ENCODE measurements at regions of chr15 and their contacts with region 1.

Region 1: GRCh38 chr15:50908210-50909009 is at the start of gene AP4E1:
- DNase-seq: peak; percentile 78 to 86
- ATAC-seq: peak; percentile 89 to 95
- H3K4me3 ChIP-seq: peak within 1 kb of the TSS; percentile 80 to 99 (median 94)
- H3K27ac ChIP-seq: peak within 1 kb of the TSS; percentile 84 to 95 (median 92)
- H3K4me1 ChIP-seq: peaks cover 18 to 24% of the 10 kb centered on the region in 2 donors
- H3K27me3 ChIP-seq: no peaks in the 10 kb centered on the region
- CTCF ChIP-seq: peak; percentile 98 to 100 (median 99)
- POLR2A ChIP-seq: peak; percentile 63 to 75
- total RNA-seq, gene AP4E1: 11.6 to 14.0 (median 13.4) TPM

Region 2: DNA sequence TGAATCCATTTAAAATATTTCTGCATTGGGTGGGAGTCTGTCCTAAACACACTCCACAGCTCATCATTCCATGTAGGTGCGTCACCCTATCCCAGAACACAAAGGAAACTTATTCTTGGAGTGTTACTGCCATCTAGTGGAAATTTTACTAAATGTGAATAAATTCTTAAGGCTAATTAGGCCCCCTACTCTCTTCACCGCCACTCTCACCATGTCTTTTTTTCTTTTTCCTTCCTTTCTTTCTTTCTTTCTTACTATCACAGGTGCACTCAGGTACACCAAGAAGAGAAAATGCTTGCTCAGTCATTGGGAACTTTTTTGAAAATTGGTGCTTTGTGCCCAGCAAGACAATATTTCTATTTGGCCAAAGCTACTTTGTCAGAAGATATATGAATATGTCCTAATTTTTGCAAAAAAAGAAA is 762.9 kb before region 1 on chr15:
- in situ Hi-C with region 1: no loop called
- intact Hi-C with region 1: loop called (anchors 5 kb)
- DNase-seq: no peak
- ATAC-seq: peak; percentile 65 to 76
- H3K4me3 ChIP-seq: no peak overlapping the region
- H3K27ac ChIP-seq: no peak overlapping the region
- H3K4me1 ChIP-seq: no peaks in the 10 kb centered on the region
- H3K27me3 ChIP-seq: no peaks in the 10 kb centered on the region
- CTCF ChIP-seq: peak; percentile 30 to 62 (median 60)
- POLR2A ChIP-seq: no peak

Region 3: DNA sequence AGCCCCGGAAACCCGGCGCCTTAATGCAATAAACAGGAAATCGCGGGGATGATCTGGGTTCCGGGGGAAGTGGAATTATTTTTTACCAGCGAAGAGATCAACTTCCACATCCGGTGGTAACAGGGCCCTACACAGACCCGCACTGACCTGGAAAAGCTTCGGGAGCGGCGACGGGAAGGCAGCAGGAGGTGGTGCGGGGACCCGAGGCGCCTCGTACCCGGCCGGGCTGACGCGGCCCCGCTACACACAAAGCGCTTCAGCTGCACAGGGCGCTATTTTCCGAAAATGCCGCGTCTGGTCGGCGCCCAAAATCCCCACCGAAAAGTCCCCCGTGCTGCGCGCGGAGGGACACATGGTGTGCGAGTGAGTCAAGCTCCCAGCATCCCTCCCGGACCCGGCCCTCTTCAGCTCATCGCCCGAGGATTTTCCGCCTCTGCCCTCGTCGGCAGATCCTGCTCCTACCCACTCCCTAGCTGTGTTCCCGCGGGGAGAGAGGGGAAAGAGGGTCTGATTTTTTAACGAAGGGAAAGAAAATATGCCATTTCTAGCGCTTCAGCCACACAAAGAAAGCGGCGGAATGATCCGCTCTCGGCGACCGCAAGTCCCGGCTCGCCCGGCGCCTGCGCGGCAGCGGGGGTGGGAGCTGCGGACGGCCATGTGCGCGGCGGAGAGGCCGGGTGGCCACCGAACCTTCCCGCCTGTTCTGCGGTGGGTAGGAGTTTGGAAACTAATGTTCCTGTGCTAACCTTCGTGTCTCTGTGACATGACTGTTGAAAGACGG is 553.4 kb before region 1 on chr15 and contains the start of gene GABPB1:
- in situ Hi-C with region 1: no loop called
- intact Hi-C with region 1: loop called (anchors 1 kb)
- DNase-seq: peak; percentile 79 to 80
- ATAC-seq: peak; percentile 87 to 90
- H3K4me3 ChIP-seq: peak within 1 kb of the TSS; percentile 79 to 94 (median 81)
- H3K27ac ChIP-seq: peak within 1 kb of the TSS; percentile 93 to 97 (median 94)
- H3K4me1 ChIP-seq: peaks cover 44 to 46% of the 10 kb centered on the region in 2 donors
- H3K27me3 ChIP-seq: no peaks in the 10 kb centered on the region
- CTCF ChIP-seq: no peak
- POLR2A ChIP-seq: peak; percentile 53 to 64
- total RNA-seq, gene GABPB1: 7.4 to 11.5 (median 8.7) TPM

Region 4: DNA sequence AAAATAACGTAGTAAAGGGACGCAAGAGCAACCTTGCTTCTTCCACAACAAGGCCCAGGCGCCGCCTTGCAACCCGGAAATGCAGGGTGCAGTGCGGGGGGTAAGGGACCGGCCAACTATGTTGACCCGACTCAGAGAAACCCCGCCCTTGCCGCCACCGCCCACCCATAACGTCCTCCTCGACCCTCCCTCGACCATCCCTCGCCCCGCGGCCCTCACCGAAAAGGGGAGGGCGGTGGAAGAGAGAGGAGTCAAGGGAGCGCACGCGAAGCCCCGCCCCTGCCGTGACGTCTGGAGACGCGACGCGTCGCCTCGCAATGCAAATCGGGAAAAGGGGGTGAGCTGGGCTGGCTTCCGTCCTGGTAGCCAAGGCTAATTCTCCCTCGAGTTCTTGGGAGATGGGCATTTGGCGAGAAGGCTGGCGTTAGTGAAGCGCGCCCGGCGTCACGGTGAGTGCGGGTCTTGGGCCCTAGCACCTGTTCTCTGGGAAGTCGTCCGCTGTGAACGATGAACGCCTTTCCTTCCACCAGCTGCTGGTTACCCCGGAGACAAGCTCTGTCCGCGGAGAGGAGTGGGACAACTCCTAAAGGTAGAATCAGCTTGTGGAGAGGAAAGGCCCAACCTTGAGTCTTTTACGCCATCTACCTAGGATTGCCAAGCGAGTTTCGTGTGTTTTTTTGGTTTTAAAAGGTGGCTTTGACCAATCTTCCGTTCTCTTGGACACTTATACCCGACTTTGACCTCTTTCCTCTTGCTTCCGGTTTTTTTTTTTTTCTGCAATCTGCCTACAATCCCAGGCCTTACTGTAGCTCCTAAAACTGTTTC is 484.1 kb before region 1 on chr15 and contains the start of gene USP8:
- in situ Hi-C with region 1: loop called in 1 of 4 experiments (anchors 25 kb)
- intact Hi-C with region 1: no loop called
- DNase-seq: peak; percentile 87 to 93
- ATAC-seq: peak; percentile 98
- H3K4me3 ChIP-seq: peak within 1 kb of the TSS; percentile 83 to 94 (median 84)
- H3K27ac ChIP-seq: peak within 1 kb of the TSS; percentile 89 to 93 (median 90)
- H3K4me1 ChIP-seq: peaks cover 20 to 26% of the 10 kb centered on the region in 2 donors
- H3K27me3 ChIP-seq: no peaks in the 10 kb centered on the region
- CTCF ChIP-seq: no peak
- POLR2A ChIP-seq: peak; percentile 81 to 83
- total RNA-seq, gene USP8: 30.8 to 49.3 (median 46.8) TPM

Region 5: DNA sequence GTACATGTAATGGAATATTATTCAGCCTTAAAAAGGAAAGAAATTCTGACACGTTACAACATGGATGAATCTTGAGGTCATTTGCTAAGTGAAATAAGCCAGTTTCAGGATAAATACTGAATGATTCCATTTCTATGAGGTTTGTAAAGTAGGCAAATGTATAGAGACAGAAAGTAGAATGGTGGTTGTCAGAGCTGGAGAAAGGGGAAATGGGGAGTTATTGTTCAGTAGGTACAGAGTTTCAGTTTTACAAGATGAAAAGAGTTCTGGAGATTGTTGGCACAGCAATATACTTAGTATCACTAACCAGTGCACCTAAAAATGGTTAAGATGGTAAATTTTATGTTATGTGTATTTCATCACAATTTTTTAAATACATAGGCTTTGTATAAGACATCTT is 423.6 kb before region 1 on chr15:
- in situ Hi-C with region 1: loop called in 1 of 4 experiments (anchors 25 kb)
- intact Hi-C with region 1: no loop called
- DNase-seq: no peak
- ATAC-seq: no peak
- H3K4me3 ChIP-seq: no peak overlapping the region
- H3K27ac ChIP-seq: no peak overlapping the region
- H3K4me1 ChIP-seq: no peaks in the 10 kb centered on the region
- H3K27me3 ChIP-seq: no peaks in the 10 kb centered on the region
- CTCF ChIP-seq: no peak
- POLR2A ChIP-seq: no peak

Region 6: GRCh38 chr15:50675536-50676144 is 232.8 kb before region 1 on chr15:
- in situ Hi-C with region 1: loop called in 1 of 4 experiments (anchors 10 kb)
- intact Hi-C with region 1: loop called (anchors 1 kb)
- DNase-seq: no peak
- ATAC-seq: no peak
- H3K4me3 ChIP-seq: no peak overlapping the region
- H3K27ac ChIP-seq: no peak overlapping the region
- H3K4me1 ChIP-seq: peaks cover 10 to 19% of the 10 kb centered on the region in 2 donors
- H3K27me3 ChIP-seq: no peaks in the 10 kb centered on the region
- CTCF ChIP-seq: peak; percentile 66 to 84 (median 80)
- POLR2A ChIP-seq: no peak

Region 7: GRCh38 chr15:50765195-50765973 is 143.0 kb before region 1 on chr15 and contains the start of gene SPPL2A:
- in situ Hi-C with region 1: no loop called
- intact Hi-C with region 1: loop called (anchors 2 kb)
- DNase-seq: peak; percentile 75 to 87
- ATAC-seq: peak; percentile 39 to 42
- H3K4me3 ChIP-seq: peak within 1 kb of the TSS; percentile 67 to 81 (median 74)
- H3K27ac ChIP-seq: peak within 1 kb of the TSS; percentile 93 to 98 (median 97)
- H3K4me1 ChIP-seq: peaks cover 37 to 46% of the 10 kb centered on the region in 2 donors
- H3K27me3 ChIP-seq: no peaks in the 10 kb centered on the region
- CTCF ChIP-seq: peak in 1 of 5 experiments; percentile 5
- POLR2A ChIP-seq: peak; percentile 96 to 97
- total RNA-seq, gene SPPL2A: 577 to 774 (median 620) TPM

Region 8: DNA sequence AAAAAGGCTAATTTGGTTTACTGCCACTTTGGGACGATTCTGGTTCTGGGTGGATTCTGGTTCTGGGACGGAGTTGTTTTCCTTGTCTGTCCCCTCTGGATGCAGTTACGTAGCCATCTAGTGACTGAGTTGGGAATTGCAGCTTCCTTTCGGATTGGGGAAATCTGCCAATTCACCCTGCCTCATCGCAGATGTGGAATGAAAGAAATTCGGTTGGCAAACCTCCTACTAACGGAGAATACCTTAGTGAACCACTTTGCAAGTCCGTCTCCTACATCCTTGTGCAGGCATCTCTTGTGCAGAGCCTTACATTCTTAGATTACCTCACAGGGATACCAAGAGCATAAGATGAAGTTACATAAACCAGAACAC is 31.4 kb before region 1 on chr15:
- in situ Hi-C with region 1: no loop called
- intact Hi-C with region 1: no loop called
- DNase-seq: peak; percentile 49 to 66
- ATAC-seq: peak; percentile 87 to 91
- H3K4me3 ChIP-seq: peak overlapping the region; percentile 44 to 53 (median 46)
- H3K27ac ChIP-seq: peak overlapping the region; percentile 60 to 74 (median 66)
- H3K4me1 ChIP-seq: peaks cover 0 to 4% of the 10 kb centered on the region in 2 donors
- H3K27me3 ChIP-seq: no peaks in the 10 kb centered on the region
- CTCF ChIP-seq: peak; percentile 90 to 97 (median 96)
- POLR2A ChIP-seq: no peak